Tibial artery (tissue), 4 donors: ENCODE measurements at regions of chr3 and their contacts with region 1.

Region 1: GRCh38 chr3:142999881-143000280 is 1.5 kb upstream of the U2SURP start:
- DNase-seq: no peak
- H3K4me3 ChIP-seq: peak overlapping the region in 1 of 2 donors; percentile 71
- H3K27ac ChIP-seq: peak overlapping the region; percentile 90 to 93
- H3K4me1 ChIP-seq: peaks cover 0 to 36% (median 28%) of the 10 kb centered on the region in 4 donors
- H3K27me3 ChIP-seq: no peaks in the 10 kb centered on the region
- CTCF ChIP-seq: no peak

Region 2: DNA sequence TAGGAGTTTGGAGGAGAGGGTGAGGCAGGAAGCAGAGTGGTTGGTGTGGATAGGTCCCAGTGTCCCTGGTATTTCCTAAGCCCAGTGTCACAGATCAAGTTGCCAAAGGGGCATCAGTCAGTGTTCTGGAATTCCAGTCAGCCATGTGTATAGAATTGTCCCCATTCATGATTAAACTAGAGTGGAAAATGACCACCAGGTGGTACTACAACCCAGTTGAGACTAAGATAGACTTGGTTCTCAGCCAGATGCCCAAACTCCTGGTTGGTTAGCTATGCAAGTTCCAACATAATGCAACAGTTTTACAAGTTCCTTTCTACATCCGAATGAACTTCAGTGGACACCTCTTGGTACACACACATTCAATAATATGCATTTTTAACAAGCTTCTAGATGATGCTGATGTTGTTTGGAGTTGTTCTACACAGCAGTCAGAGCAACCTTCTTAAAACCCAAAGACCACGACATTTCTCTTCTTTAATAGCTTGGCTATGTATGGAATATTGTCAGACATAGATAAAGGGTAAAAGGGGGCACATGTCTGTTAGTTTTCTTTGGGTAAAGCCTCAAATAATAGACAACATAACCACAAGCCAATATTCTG is 413.0 kb before region 1 on chr3:
- intact Hi-C with region 1: loop called (anchors 5 kb)
- DNase-seq: no peak
- H3K4me3 ChIP-seq: no peak overlapping the region
- H3K27ac ChIP-seq: no peak overlapping the region
- H3K4me1 ChIP-seq: no peaks in the 10 kb centered on the region
- H3K27me3 ChIP-seq: peaks cover 0 to 6% of the 10 kb centered on the region in 2 donors
- CTCF ChIP-seq: peak; percentile 53 to 66

Region 3: DNA sequence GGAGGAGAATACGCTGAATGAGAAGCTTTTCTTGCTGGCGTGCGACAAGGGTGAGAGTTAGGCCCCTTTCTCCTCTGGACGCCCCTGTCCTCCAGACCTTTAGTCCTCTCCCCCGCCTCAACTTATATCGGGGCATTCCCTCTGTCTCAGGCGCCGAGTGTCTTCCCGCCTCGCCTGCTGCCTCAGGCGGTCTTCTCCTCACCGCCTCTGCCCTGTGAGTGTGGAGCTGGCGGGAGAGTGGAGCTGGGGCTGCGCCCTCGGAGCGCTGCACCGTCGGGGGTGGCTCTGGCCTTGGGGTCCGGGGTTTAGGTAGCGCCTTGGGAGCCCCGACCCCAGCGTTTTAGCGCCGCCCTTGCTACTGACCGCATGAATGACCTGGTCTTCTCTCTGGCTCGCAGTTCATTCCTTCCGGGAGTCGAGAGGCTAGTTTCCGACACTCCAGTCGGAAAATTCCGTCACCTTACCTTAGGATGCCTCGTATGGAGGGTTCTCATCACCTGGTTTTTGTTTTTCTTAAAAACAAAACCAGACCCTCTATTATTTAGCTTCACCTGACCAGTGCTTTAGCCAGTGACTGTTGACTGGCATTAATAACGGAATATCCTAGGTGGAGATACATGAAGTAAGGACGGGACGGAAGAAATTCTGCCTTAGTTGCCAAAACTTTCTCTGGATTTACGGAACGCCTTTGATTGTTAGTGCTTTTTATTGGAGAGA is 275.0 kb before region 1 on chr3:
- intact Hi-C with region 1: loop called (anchors 5 kb)
- DNase-seq: peak; percentile 31 to 66
- H3K4me3 ChIP-seq: peak overlapping the region; percentile 73 to 87
- H3K27ac ChIP-seq: peak overlapping the region; percentile 78 to 95
- H3K4me1 ChIP-seq: peaks cover 0 to 24% (median 3%) of the 10 kb centered on the region in 4 donors
- H3K27me3 ChIP-seq: no peaks in the 10 kb centered on the region
- CTCF ChIP-seq: no peak